T-cell (primary cell): ENCODE measurements at regions of chr16 and their contacts with region 1.

Region 1: DNA sequence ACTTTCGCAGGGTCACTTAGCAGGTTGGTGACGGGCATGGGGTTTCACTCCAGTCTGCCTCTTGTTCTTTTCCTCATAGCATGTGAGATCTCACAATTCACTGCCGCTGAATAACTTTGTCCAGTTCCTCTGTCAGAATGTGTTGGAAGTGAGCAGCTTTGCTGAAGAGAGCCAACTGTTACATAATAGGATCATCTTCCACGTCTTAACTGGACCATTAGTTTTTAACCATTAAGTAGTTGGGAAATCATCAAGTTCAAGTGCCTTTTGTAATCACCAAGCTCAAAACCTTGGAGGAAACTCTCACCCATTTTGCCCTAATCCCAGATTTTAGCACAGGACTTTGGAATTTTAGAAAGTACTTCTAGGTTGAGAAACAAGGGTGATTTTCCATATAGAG is 290.6 kb downstream of the WWOX start:
- DNase-seq: no peak
- ATAC-seq: no peak
- H3K4me3 ChIP-seq: no peak overlapping the region
- H3K4me3 Mint-ChIP-seq: no peak overlapping the region
- H3K27ac ChIP-seq: no peak overlapping the region
- H3K27ac Mint-ChIP-seq: no peak overlapping the region
- H3K4me1 ChIP-seq: no peaks in the 10 kb centered on the region
- H3K4me1 Mint-ChIP-seq: no peaks in the 10 kb centered on the region
- H3K27me3 ChIP-seq: no peaks in the 10 kb centered on the region
- H3K27me3 Mint-ChIP-seq: no peaks in the 10 kb centered on the region

Region 2: GRCh38 chr16:79150632-79151310 is 760.7 kb after region 1 on chr16:
- CTCF ChIA-PET with region 1: no interaction called
- POLR2A ChIA-PET with region 1: interaction called in 1 of 2 experiments, 17 read pairs
- DNase-seq: no peak
- ATAC-seq: no peak
- H3K4me3 ChIP-seq: no peak overlapping the region
- H3K4me3 Mint-ChIP-seq: no peak overlapping the region
- H3K27ac ChIP-seq: no peak overlapping the region
- H3K27ac Mint-ChIP-seq: no peak overlapping the region
- H3K4me1 ChIP-seq: no peaks in the 10 kb centered on the region
- H3K4me1 Mint-ChIP-seq: peaks cover 0 to 7% (median 5%) of the 10 kb centered on the region in 3 donors
- H3K27me3 ChIP-seq: no peaks in the 10 kb centered on the region
- H3K27me3 Mint-ChIP-seq: peaks cover 0 to 2% of the 10 kb centered on the region in 2 donors